ENCODE measurements at regions of chr5 and their contacts with region 1.

Region 1: GRCh38 chr5:56200856-56201666 is 32.1 kb downstream of the ANKRD55 start:
- DNase-seq: peak in 39 of 42 donors; percentile 11 to 73 (median 50)

Region 2: DNA sequence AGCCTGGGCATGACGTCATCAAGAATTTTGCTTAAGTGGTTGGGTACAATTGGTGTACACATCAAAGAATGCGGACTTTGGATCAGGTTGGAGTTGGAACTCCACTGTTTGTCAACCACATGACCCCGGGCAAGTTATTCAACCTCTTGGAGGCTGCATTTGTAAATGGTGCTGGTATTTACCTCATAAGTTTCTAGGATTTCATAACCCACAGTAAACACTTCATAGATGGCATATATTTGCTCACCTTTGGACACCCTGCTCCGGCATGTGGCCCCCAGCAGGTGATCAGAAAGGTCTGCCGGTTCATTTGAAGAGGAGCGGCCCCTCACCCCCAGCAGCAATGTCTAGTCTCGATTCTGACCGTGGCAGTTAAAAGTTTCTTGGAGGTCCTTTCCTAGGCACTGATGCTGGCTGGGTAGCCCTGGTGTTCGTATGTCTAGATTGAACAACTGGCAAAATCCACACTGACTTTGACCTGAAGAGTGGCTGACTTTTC is 266.9 kb before region 1 on chr5:
- intact Hi-C with region 1: loop called (anchors 5 kb)
- DNase-seq: no peak